ENCODE measurements at regions of chr17 and their contacts with region 1.

Region 1: DNA sequence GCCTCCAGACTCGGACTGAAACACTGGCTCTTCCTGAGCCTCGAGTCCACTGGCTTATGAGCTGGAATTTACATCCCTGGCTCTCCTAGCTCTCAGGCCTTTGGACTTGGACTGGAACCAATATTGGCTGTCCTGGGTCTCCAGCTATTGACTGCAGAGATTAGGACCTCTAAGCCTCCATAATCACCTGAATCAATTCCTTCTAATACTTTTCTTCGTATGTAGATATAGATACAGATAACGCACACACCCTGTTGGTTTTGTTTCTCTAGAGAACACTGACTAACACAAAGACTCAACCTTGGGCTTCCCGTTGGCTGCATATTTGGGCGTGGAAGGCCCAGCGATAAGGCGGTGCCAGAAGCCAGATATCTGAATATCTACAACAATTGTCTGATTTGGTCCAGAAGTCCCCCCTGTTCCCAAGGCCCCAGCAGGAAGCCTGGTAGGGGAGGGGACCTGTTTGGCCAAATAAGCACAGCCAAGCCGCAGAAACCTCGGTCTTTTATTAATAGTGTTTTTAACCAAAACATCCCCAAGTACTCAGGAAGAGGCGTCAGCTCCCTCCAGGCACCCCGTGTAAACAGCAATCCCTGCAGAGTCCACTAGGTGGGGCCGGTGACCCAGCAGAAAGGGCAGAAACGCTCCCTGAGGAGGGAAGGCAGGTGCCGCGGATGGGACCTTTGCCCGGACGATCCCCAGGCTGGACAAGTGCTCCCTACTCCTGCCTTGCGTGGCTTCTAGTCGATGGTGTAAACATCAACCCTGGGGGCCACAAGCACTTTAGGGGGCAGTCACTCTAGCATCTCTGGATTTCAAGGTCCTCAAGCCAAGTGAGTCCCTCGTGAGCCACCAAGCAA is 57.0 kb downstream of the ABR start:
- DNase-seq: peak in 1 of 2 experiments; percentile 98
- H3K4me3 ChIP-seq: no peak overlapping the region
- H3K27ac ChIP-seq: no peak overlapping the region
- H3K4me1 ChIP-seq: peaks cover 0 to 7% (median 4%) of the 10 kb centered on the region in 4 experiments; a peak in 5 of 7 replicates
- H3K27me3 ChIP-seq: peaks cover 0 to 2% (median 0%) of the 10 kb centered on the region in 4 experiments; a peak in 1 of 7 replicates
- CTCF ChIP-seq: peak; percentile 81 to 90 (median 86)
- EP300 ChIP-seq: no peak
- POLR2A ChIP-seq: no peak
- RAD21 ChIP-seq: peak; percentile 87 to 88

Region 2: DNA sequence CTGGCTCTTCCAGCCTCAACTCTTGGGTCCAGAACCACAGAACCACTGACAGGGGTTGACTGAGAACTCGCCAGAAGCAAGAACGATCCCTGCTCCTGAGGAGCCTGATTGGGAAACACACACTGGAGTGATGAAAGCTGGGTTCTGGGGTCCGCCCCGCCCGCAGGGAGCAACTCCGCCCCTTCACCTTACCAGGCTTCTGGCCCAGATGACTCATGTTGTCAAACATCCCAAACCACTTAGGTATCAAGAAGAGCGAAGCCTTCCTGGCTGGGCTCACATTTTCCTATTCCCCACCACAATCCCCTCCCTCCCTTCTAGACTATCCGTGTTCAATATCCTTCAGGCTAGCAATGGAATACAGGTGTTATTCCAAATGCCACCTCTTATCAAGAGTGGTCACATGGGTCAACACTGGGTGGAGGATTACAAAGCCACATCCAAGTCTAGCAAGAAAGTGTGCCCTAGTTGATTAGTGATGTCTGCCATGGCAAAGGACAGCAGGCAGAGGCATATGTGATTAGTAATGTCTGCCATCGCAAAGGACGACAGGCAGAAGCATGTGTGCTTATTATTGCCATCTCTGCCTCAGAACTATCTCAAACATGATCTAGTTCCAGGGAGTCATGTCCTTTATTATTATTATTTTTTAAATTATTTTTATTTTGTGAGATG is 55.3 kb before region 1 on chr17:
- CTCF ChIA-PET with region 1: no interaction called
- POLR2A ChIA-PET with region 1: no interaction called
- DNase-seq: no peak
- H3K4me3 ChIP-seq: no peak overlapping the region
- H3K27ac ChIP-seq: no peak overlapping the region
- H3K4me1 ChIP-seq: no peaks in the 10 kb centered on the region; a peak in 1 of 7 replicates
- H3K27me3 ChIP-seq: no peaks in the 10 kb centered on the region
- CTCF ChIP-seq: no peak
- EP300 ChIP-seq: no peak
- POLR2A ChIP-seq: no peak
- RAD21 ChIP-seq: no peak

Region 3: DNA sequence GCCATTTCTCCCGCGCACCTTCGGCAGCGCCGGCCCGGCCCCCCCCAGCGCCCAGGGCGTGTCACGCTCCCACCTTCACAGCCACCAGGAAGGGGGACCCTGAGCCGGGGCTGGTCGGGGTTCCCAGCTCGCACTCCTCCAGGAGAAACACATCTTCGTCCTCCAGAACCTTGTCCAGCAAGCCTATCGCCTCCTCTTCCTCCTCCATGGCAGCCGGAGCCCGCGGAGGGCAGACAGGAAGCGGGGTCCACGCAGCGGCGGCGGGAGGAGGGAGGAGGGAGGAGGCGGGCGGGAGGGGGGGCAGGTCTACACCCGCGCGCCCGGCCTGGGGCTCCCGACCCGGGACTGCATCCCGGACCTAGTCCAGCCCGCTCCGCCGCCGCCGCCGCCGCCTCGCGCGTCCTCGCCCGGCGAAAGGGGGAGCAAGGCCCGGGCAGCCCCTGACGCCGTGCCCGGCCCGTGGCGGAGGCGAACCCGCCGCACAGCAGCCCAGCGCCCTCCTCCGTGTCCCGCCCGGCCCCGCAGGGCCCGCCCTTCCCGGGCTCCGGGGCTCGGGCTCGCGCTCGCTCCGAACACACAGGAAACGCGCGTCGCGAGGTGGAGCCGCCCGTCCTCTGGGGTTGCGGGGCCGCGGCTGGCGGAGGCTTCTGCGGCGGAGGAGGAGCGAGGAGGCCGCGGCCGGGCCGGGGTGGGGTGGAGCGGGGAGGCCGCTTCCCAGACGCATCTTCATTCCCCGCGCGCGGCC is 13.7 kb before region 1 on chr17:
- CTCF ChIA-PET with region 1: interaction called, 29 read pairs
- POLR2A ChIA-PET with region 1: interaction called, 3 read pairs
- DNase-seq: peak in 1 of 2 experiments; percentile 79
- H3K4me3 ChIP-seq: peak overlapping the region; percentile 47 to 84 (median 50)
- H3K27ac ChIP-seq: no peak overlapping the region
- H3K4me1 ChIP-seq: peaks cover 0 to 28% (median 20%) of the 10 kb centered on the region in 4 experiments; a peak in 6 of 7 replicates
- H3K27me3 ChIP-seq: peaks cover 0 to 10% (median 7%) of the 10 kb centered on the region in 4 experiments; a peak in 5 of 7 replicates
- CTCF ChIP-seq: no peak
- EP300 ChIP-seq: no peak
- POLR2A ChIP-seq: no peak
- RAD21 ChIP-seq: no peak

Region 4: GRCh38 chr17:1137465-1137894 is 14.7 kb after region 1 on chr17:
- CTCF ChIA-PET with region 1: interaction called, 178 read pairs
- POLR2A ChIA-PET with region 1: interaction called, 6 read pairs
- DNase-seq: no peak
- H3K4me3 ChIP-seq: no peak overlapping the region
- H3K27ac ChIP-seq: no peak overlapping the region
- H3K4me1 ChIP-seq: no peaks in the 10 kb centered on the region
- H3K27me3 ChIP-seq: no peaks in the 10 kb centered on the region
- CTCF ChIP-seq: no peak
- EP300 ChIP-seq: no peak
- POLR2A ChIP-seq: no peak
- RAD21 ChIP-seq: no peak

Region 5: GRCh38 chr17:1147661-1148060 is 24.9 kb after region 1 on chr17:
- CTCF ChIA-PET with region 1: interaction called, 178 read pairs
- POLR2A ChIA-PET with region 1: interaction called, 4 read pairs
- DNase-seq: peak; percentile 60 to 87
- H3K4me3 ChIP-seq: no peak overlapping the region
- H3K27ac ChIP-seq: no peak overlapping the region
- H3K4me1 ChIP-seq: peaks cover 0 to 4% (median 1%) of the 10 kb centered on the region in 4 experiments; a peak in 2 of 7 replicates
- H3K27me3 ChIP-seq: no peaks in the 10 kb centered on the region
- CTCF ChIP-seq: peak; percentile 68 to 86 (median 72)
- EP300 ChIP-seq: no peak
- POLR2A ChIP-seq: no peak
- RAD21 ChIP-seq: peak; percentile 76 to 81

Region 6: DNA sequence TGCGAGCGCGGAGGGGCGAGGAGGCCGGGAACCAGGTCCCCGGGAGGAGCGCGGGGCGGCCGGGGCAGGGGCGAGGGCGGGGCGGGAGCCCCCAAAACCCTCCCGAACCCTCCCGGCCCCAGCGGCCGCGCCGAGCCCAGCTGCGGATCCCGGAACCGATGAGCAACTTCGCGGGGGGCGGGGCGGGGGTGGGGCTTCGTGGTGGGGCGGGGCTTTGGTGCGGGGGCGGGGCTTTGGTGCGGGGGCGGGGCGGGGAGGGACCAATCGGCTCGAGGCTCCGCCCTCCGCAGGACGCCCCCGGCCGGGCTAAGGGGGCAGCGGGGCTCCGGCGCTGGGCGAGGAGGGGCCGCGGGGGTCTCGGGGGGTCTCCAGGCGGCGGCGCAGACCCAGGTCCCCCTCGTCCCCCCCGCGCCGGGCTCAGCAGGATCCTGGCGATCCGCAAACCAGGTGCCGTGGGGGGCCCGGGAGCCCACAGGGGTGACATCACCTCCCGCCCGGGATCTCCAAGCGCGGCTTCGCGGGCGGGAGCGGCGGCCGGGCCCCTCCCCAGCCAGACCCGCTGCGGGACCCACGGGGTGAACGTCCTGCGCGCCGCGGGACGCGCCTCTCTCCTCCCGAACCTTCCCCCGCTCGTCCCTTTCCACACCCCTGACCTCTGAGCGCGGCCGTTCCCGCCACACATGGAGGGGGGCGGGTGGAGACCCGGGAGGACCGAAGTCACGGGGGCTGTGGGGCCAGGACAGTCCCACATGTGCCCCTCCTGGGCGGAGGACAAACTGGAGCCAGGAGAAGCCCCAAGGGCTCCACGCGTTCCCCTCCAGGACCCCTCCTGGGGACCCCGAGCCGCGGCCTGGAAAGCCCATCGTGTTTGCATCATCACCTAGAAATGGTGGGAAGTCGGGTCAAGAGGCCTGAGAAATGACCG is 57.3 kb after region 1 on chr17 and contains the start of gene ABR:
- CTCF ChIA-PET with region 1: interaction called, 63 read pairs
- POLR2A ChIA-PET with region 1: interaction called, 3 read pairs
- DNase-seq: peak in 1 of 2 experiments; percentile 75
- H3K4me3 ChIP-seq: peak within 1 kb of the TSS; percentile 52 to 96 (median 65)
- H3K27ac ChIP-seq: no peak within 1 kb of the TSS
- H3K4me1 ChIP-seq: peaks cover 0 to 20% (median 10%) of the 10 kb centered on the region in 4 experiments; a peak in 6 of 7 replicates
- H3K27me3 ChIP-seq: peaks cover 0 to 28% (median 19%) of the 10 kb centered on the region in 4 experiments; a peak in 5 of 7 replicates
- CTCF ChIP-seq: no peak
- EP300 ChIP-seq: no peak
- POLR2A ChIP-seq: no peak
- RAD21 ChIP-seq: no peak
- total RNA-seq, gene ABR: 41.4 and 44.8 TPM in 2 replicates

Region 7: DNA sequence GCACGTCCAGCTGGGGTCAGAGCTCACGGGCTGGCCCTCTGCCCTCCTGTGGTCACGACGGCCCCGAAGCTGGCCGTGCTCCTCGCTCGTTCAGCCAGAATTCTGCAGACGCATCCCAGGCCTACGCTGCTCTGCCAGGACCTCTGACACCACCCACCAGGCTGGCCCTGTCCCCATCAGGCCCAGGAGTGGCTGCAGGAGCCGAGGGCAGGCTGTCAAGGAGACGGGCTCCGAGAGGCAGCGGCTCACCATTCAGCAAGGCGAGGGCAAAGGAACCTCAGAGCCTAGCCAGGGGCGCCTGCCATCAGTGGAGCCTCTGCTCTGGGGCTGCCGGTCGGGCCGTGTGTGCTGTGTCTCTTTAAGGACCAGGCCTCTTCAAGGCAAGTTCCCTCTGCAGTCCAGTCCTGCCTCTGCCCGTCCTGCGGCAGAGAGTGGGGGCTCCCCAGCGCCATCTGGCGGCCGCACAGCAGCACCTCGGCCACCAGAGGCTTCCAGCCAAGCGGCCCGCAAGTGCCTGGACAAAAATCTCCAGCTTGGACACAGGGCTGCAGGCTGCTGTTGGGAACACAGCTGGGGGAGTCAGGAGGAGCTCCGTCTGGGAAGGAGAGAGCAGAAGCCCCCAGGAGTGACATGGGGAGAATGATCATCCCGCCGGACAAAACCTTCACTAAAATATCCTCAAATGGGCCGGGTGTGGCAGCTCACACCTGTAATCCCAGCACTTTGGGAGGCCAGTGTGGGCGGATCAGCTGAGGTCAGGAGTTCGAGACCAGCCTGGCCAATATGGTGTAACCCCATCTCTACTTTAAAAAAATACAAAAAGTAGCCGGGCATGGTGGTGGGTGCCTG is 64.4 kb after region 1 on chr17:
- CTCF ChIA-PET with region 1: interaction called, 63 read pairs
- POLR2A ChIA-PET with region 1: interaction called, 4 read pairs
- DNase-seq: peak in 1 of 2 experiments; percentile 90
- H3K4me3 ChIP-seq: peak overlapping the region in 1 of 4 experiments; percentile 23; a peak in 1 of 8 replicates
- H3K27ac ChIP-seq: no peak overlapping the region
- H3K4me1 ChIP-seq: peaks cover 0 to 9% (median 4%) of the 10 kb centered on the region in 4 experiments; a peak in 5 of 7 replicates
- H3K27me3 ChIP-seq: peaks cover 0 to under 1% (median under 1%) of the 10 kb centered on the region in 4 experiments; a peak in 4 of 7 replicates
- CTCF ChIP-seq: peak; percentile 89 to 98 (median 98)
- EP300 ChIP-seq: no peak
- POLR2A ChIP-seq: no peak
- RAD21 ChIP-seq: peak; percentile 74 to 82

Measured in H1 (cell line).